Heart right ventricle (tissue), 16 donors: ENCODE measurements at regions of chr15 and their contacts with region 1.

Region 1: GRCh38 chr15:72047020-72047419 is 70.9 kb downstream of the MYO9A start:
- DNase-seq: no peak
- ATAC-seq: no peak
- H3K4me3 ChIP-seq: no peak overlapping the region
- H3K27ac ChIP-seq: no peak overlapping the region
- H3K4me1 ChIP-seq: peaks cover 0 to 16% (median 4%) of the 10 kb centered on the region in 9 donors
- H3K27me3 ChIP-seq: no peaks in the 10 kb centered on the region
- CTCF ChIP-seq: no peak

Region 2: GRCh38 chr15:71997691-71998090 is 49.3 kb before region 1 on chr15:
- intact Hi-C with region 1: no loop called
- DNase-seq: no peak
- ATAC-seq: no peak
- H3K4me3 ChIP-seq: no peak overlapping the region
- H3K27ac ChIP-seq: no peak overlapping the region
- H3K4me1 ChIP-seq: no peaks in the 10 kb centered on the region
- H3K27me3 ChIP-seq: no peaks in the 10 kb centered on the region
- CTCF ChIP-seq: no peak

Region 3: GRCh38 chr15:72117486-72118399 is 70.7 kb after region 1 on chr15 and contains the start of gene MYO9A:
- intact Hi-C with region 1: loop called in 1 of 10 experiments (anchors 10 kb)
- DNase-seq: peak; percentile 98 to 99
- ATAC-seq: peak; percentile 88 to 96 (median 92)
- H3K4me3 ChIP-seq: peak within 1 kb of the TSS; percentile 74 to 98 (median 92)
- H3K27ac ChIP-seq: peak within 1 kb of the TSS; percentile 88 to 99 (median 98)
- H3K4me1 ChIP-seq: peaks cover 0 to 46% (median 26%) of the 10 kb centered on the region in 9 donors
- H3K27me3 ChIP-seq: no peaks in the 10 kb centered on the region
- CTCF ChIP-seq: peak in 5 of 9 donors; percentile 17 to 56 (median 27)
- total RNA-seq, gene MYO9A: 23.4 to 36.9 (median 30.0) TPM